Adrenal gland (tissue), 19 donors: ENCODE measurements at regions of chr16 and their contacts with region 1.

Region 1: GRCh38 chr16:22297114-22297878 is at the start of gene POLR3E:
- DNase-seq: peak; percentile 98 to 100 (median 99)
- H3K4me3 ChIP-seq: peak within 1 kb of the TSS; percentile 39 to 85 (median 63)
- H3K27ac ChIP-seq: peak within 1 kb of the TSS; percentile 85 to 97 (median 96)
- H3K4me1 ChIP-seq: peaks cover 9 to 22% of the 10 kb centered on the region in 2 donors
- H3K27me3 ChIP-seq: no peaks in the 10 kb centered on the region
- CTCF ChIP-seq: peak; percentile 68 to 98 (median 93)
- POLR2A ChIP-seq: peak; percentile 59 to 84
- total RNA-seq, gene POLR3E: 43.8 to 99.4 (median 54.3) TPM

Region 2: DNA sequence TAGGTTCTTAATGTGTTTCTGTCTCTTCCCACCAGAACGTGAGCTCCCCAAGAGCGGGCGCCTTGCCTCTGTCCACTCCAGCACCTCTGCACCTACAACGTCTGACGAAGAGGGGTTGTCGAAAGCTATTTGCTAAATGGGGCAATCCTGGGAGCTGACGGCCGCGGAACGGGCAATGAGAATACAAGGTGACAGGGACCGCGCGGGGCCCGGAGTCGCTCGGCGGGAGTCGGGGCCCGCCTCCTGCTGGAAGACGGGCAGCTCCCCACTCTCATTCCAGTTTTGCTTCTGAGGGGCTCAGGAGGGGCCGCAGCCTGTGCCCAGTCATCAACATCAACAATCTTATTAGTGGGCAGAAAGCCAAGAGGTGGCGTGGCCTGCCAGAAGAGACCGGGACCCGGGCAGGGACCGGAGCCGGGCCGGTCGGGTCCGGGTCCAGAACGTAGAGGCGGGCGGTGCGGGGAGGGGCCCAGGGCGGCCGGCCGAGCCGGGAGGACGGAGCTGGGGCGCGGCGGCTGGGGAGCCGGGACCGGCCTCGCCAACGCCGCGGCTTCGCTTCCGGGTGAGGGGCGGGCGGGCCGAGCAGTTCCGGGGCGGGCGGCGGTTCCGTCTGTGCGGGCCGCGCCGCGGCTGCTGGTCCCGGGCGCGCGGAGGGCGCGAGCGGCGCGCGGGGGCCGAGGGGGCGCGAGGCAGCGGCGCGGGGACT is 289.6 kb before region 1 on chr16 and contains the start of gene MOSMO:
- intact Hi-C with region 1: loop called in 1 of 2 experiments (anchors 10 kb)
- DNase-seq: peak; percentile 71 to 82 (median 73)
- H3K4me3 ChIP-seq: peak within 1 kb of the TSS; percentile 70 to 99 (median 84)
- H3K27ac ChIP-seq: peak within 1 kb of the TSS; percentile 61 to 94 (median 88)
- H3K4me1 ChIP-seq: peaks cover 16 to 38% of the 10 kb centered on the region in 2 donors
- H3K27me3 ChIP-seq: no peaks in the 10 kb centered on the region
- CTCF ChIP-seq: peak in 4 of 6 experiments; percentile 4 to 16 (median 10)
- POLR2A ChIP-seq: peak; percentile 45 to 58
- total RNA-seq, gene MOSMO: 13.3 to 49.0 (median 21.5) TPM

Region 3: GRCh38 chr16:22195695-22196558 is 101.4 kb before region 1 on chr16:
- intact Hi-C with region 1: loop called (anchors 2 to 5 kb)
- DNase-seq: peak; percentile 81 to 98 (median 91)
- H3K4me3 ChIP-seq: peak overlapping the region in 2 of 4 donors; percentile 34 to 51
- H3K27ac ChIP-seq: peak overlapping the region; percentile 57 to 86 (median 68)
- H3K4me1 ChIP-seq: peaks cover 27 to 32% of the 10 kb centered on the region in 2 donors
- H3K27me3 ChIP-seq: no peaks in the 10 kb centered on the region
- CTCF ChIP-seq: peak; percentile 80 to 98 (median 88)
- POLR2A ChIP-seq: peak; percentile 38 to 54